PC-9 (cell line): ENCODE measurements at regions of chr16 and their contacts with region 1.

Region 1: DNA sequence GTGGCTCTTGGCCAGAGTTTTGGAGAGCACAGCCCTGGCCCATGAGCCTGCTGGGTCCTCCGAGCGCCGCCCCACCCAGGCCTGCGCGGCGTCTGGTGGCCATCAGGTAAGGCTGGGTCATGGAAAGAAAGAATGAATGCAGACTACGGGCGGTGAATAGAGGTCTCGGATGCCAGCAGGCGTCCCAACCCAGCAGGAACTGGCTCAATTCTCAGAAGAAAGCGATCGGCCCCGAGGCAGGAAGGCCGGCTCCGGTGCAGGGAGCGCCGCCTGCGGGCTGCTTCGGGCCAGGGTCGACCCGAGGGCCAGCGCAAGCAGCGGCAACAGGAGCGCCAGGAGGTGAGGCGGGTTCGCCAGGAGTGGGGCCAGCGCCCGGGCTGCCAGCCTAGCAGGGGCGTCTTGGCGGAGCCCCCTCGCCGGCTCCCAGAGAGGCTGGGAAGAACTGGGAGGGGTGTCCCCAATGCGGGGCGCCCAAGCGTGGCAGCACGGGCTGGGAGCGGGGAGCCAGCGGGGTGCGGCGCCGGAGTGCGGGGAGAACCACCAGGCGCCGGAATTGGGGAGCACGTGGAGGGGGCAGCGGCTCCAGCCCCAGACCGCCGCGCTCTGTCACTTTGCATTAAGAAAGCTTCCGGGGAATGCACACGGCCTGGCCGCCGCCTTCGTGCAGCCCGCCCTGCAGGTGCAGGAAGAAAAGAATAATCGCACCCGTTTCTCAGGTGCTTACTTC is 7.1 kb upstream of the TMC5 start:
- DNase-seq: peak; percentile 60 to 78
- H3K4me3 ChIP-seq: peak overlapping the region; percentile 79
- H3K27ac ChIP-seq: peak overlapping the region; percentile 83
- H3K4me1 ChIP-seq: peaks cover 51% of the 10 kb centered on the region
- H3K27me3 ChIP-seq: no peaks in the 10 kb centered on the region
- CTCF ChIP-seq: peak; percentile 49; the same call in 1 of the 2 replicates

Region 2: GRCh38 chr16:19307587-19308241 is 102.9 kb before region 1 on chr16:
- CTCF ChIA-PET with region 1: interaction called, 12 read pairs
- POLR2A ChIA-PET with region 1: no interaction called
- intact Hi-C with region 1: no loop called
- DNase-seq: peak in 1 of 2 experiments; percentile 32
- H3K4me3 ChIP-seq: no peak overlapping the region
- H3K27ac ChIP-seq: no peak overlapping the region
- H3K4me1 ChIP-seq: no peaks in the 10 kb centered on the region
- H3K27me3 ChIP-seq: no peaks in the 10 kb centered on the region
- CTCF ChIP-seq: no peak

Region 3: GRCh38 chr16:19382887-19383816 is 27.4 kb before region 1 on chr16:
- CTCF ChIA-PET with region 1: interaction called, 6 read pairs
- POLR2A ChIA-PET with region 1: interaction called, 3 read pairs
- intact Hi-C with region 1: loop called (anchors 1 kb)
- DNase-seq: peak in 1 of 2 experiments; percentile 36
- H3K4me3 ChIP-seq: no peak overlapping the region
- H3K27ac ChIP-seq: peak overlapping the region; percentile 66
- H3K4me1 ChIP-seq: peaks cover 58% of the 10 kb centered on the region
- H3K27me3 ChIP-seq: no peaks in the 10 kb centered on the region
- CTCF ChIP-seq: no peak

Region 4: GRCh38 chr16:19389246-19389645 is 21.4 kb before region 1 on chr16:
- CTCF ChIA-PET with region 1: interaction called, 3 read pairs
- POLR2A ChIA-PET with region 1: interaction called, 10 read pairs
- intact Hi-C with region 1: loop called (anchors 1 kb)
- DNase-seq: peak in 1 of 2 experiments; percentile 48
- H3K4me3 ChIP-seq: no peak overlapping the region
- H3K27ac ChIP-seq: no peak overlapping the region
- H3K4me1 ChIP-seq: peaks cover 49% of the 10 kb centered on the region
- H3K27me3 ChIP-seq: no peaks in the 10 kb centered on the region
- CTCF ChIP-seq: peak; percentile 57

Region 5: DNA sequence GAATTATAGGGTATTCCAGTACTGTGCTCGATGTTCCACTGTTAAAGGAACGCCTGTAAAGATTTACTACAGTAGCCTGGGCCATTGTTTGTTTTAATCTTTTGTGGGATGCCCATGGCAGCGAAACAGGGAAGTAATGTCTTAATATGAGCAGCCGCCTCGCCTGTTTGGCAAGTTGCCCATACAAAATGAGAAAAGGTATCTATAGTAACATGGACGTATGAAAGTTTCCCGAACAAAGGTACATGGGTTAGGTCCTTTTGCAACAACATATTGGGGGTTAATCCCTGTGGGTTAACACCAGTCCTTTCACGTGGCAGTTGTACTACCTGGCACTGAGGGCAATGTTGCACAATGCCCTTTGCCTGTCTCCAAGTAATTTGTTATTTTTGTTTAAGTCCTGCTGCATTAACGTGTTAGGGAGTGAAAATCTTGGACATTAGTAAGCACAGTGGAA is 14.0 kb before region 1 on chr16:
- CTCF ChIA-PET with region 1: interaction called, 3 read pairs
- POLR2A ChIA-PET with region 1: interaction called, 10 read pairs
- intact Hi-C with region 1: loop called (anchors 1 kb)
- DNase-seq: peak; percentile 80 to 96
- H3K4me3 ChIP-seq: peak overlapping the region; percentile 29; the same call in 1 of the 2 replicates
- H3K27ac ChIP-seq: peak overlapping the region; percentile 69
- H3K4me1 ChIP-seq: peaks cover 56% of the 10 kb centered on the region
- H3K27me3 ChIP-seq: no peaks in the 10 kb centered on the region
- CTCF ChIP-seq: no peak

Region 6: GRCh38 chr16:19488213-19488640 is 77.6 kb after region 1 on chr16:
- CTCF ChIA-PET with region 1: interaction called, 17 read pairs
- POLR2A ChIA-PET with region 1: no interaction called
- intact Hi-C with region 1: no loop called
- DNase-seq: no peak
- H3K4me3 ChIP-seq: no peak overlapping the region
- H3K27ac ChIP-seq: no peak overlapping the region
- H3K4me1 ChIP-seq: 0 out of 2 replicates have a peak, but pooled peaks cover 5% of the 10 kb centered on the region
- H3K27me3 ChIP-seq: no peaks in the 10 kb centered on the region
- CTCF ChIP-seq: no peak